AG04450 (cell line): ENCODE measurements at regions of chr3 and their contacts with region 1.

Region 1: DNA sequence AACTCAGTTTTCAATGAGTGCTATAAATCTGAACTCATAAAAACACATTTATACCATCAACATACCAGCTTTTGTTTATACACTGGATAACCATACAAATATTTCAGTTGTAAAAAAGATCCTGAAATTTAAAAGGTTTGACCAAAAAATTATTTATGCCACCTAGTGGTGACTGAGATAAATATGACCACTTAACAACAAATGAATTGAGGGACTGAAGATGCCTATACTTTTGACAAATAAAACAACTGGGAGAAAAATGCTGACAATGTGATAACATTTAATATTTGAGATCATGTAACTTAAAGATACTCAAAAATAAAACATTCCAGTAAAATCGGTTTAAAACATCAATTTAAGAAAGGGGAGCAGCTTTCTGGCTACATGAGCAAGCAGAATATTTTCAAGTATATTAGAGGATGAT is 30.4 kb downstream of the ATG3 start:
- DNase-seq: peak; percentile 6
- H3K4me3 ChIP-seq: no peak overlapping the region
- H3K27ac ChIP-seq: no peak overlapping the region
- H3K27me3 ChIP-seq: no peaks in the 10 kb centered on the region
- CTCF ChIP-seq: peak; percentile 53

Region 2: GRCh38 chr3:112136959-112137693 is 394.2 kb before region 1 on chr3:
- CTCF ChIA-PET with region 1: interaction called, 11 read pairs
- POLR2A ChIA-PET with region 1: no interaction called
- DNase-seq: no peak
- H3K4me3 ChIP-seq: no peak overlapping the region
- H3K27ac ChIP-seq: no peak overlapping the region
- H3K27me3 ChIP-seq: no peaks in the 10 kb centered on the region
- CTCF ChIP-seq: peak; percentile 71

Region 3: DNA sequence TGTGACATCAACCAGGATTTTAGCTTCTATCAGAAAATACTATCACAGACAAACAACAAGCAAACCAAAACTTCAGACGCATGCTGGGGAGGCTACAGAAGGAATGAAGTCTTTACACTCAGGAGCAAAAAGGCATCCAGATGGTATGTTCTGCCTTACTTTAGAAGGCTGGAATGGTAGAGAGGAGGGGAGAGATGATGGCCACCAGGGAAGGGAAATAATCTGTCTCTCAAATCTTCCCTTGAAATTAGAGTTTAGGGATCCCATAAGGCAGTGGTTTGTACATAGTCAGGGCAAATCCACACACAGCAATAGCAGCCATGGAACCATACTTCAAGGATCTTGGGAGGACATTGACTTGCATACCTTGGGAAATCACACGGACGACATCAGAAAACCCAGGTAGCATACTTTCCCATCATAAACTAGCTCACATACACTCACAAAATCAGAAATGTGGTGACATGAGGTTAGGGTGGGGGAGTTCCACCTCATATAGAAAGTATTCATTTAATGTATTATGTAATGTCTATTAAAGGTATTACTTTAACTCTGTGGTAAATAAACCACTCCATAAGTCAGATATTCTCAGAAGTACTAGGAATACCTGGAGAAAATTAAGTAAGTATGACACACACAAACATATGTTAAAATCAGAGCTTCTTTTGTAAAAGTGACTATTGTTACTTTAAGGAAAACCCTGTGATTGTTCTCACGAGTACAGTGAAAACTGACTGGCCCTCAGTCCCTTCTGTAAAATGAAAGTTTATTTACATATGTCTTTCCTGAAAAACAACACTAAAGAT is 41.5 kb before region 1 on chr3:
- CTCF ChIA-PET with region 1: no interaction called
- POLR2A ChIA-PET with region 1: no interaction called
- DNase-seq: no peak
- H3K4me3 ChIP-seq: no peak overlapping the region
- H3K27ac ChIP-seq: no peak overlapping the region
- H3K27me3 ChIP-seq: peaks cover 2% of the 10 kb centered on the region
- CTCF ChIP-seq: no peak